K562 (cell line): ENCODE measurements at regions of chr3 and their contacts with region 1.

Region 1: GRCh38 chr3:146469150-146470017 is at the start of gene PLSCR2:
- DNase-seq: peak; percentile 85 to 88 (median 86)
- ATAC-seq: peak; percentile 97
- H3K4me3 ChIP-seq: peak within 1 kb of the TSS; percentile 48
- H3K27ac ChIP-seq: peak within 1 kb of the TSS; percentile 82
- H3K4me1 ChIP-seq: peaks cover 3 to 9% of the 10 kb centered on the region in 2 experiments; a peak in 2 of 5 replicates
- H3K27me3 ChIP-seq: no peaks in the 10 kb centered on the region
- CTCF ChIP-seq: no peak
- EP300 ChIP-seq: no peak
- POLR2A ChIP-seq: peak; percentile 89
- RAD21 ChIP-seq: no peak; a peak in 1 of 4 replicates
- polyA plus RNA-seq, gene PLSCR2: 0.07 to 0.49 TPM

Region 2: GRCh38 chr3:146200461-146201220 is 268.7 kb before region 1 on chr3:
- CTCF ChIA-PET with region 1: no interaction called
- POLR2A ChIA-PET with region 1: no interaction called
- in situ Hi-C with region 1: no loop called
- intact Hi-C with region 1: no loop called
- DNase-seq: no peak
- ATAC-seq: no peak
- H3K4me3 ChIP-seq: no peak overlapping the region
- H3K27ac ChIP-seq: no peak overlapping the region
- H3K4me1 ChIP-seq: no peaks in the 10 kb centered on the region
- H3K27me3 ChIP-seq: no peaks in the 10 kb centered on the region
- CTCF ChIP-seq: no peak
- EP300 ChIP-seq: no peak
- POLR2A ChIP-seq: no peak
- RAD21 ChIP-seq: no peak

Region 3: GRCh38 chr3:146496251-146496650 is 26.9 kb after region 1 on chr3:
- CTCF ChIA-PET with region 1: no interaction called
- POLR2A ChIA-PET with region 1: interaction called, 5 read pairs
- in situ Hi-C with region 1: no loop called
- intact Hi-C with region 1: loop called (anchors 2 kb)
- DNase-seq: no peak
- ATAC-seq: peak; percentile 9; the same call in 1 of the 3 replicates
- H3K4me3 ChIP-seq: no peak overlapping the region
- H3K27ac ChIP-seq: peak overlapping the region; percentile 73
- H3K4me1 ChIP-seq: peaks cover 9 to 15% of the 10 kb centered on the region in 2 experiments; a peak in 4 of 5 replicates
- H3K27me3 ChIP-seq: no peaks in the 10 kb centered on the region
- CTCF ChIP-seq: no peak
- EP300 ChIP-seq: no peak
- POLR2A ChIP-seq: no peak
- RAD21 ChIP-seq: no peak

Region 4: GRCh38 chr3:146503461-146504202 is 34.2 kb after region 1 on chr3:
- CTCF ChIA-PET with region 1: no interaction called
- POLR2A ChIA-PET with region 1: no interaction called
- in situ Hi-C with region 1: no loop called
- intact Hi-C with region 1: loop called (anchors 2 kb)
- DNase-seq: no peak
- ATAC-seq: peak; percentile 65
- H3K4me3 ChIP-seq: no peak overlapping the region
- H3K27ac ChIP-seq: no peak overlapping the region; the same call in 2 of the 3 replicates
- H3K4me1 ChIP-seq: peaks cover 5 to 30% of the 10 kb centered on the region in 2 experiments; a peak in 4 of 5 replicates
- H3K27me3 ChIP-seq: no peaks in the 10 kb centered on the region
- CTCF ChIP-seq: no peak
- EP300 ChIP-seq: no peak
- POLR2A ChIP-seq: no peak
- RAD21 ChIP-seq: 0 out of 4 replicates have a peak, but pooled peaks of 1 of the 2 experiments have one; percentile 5

Region 5: DNA sequence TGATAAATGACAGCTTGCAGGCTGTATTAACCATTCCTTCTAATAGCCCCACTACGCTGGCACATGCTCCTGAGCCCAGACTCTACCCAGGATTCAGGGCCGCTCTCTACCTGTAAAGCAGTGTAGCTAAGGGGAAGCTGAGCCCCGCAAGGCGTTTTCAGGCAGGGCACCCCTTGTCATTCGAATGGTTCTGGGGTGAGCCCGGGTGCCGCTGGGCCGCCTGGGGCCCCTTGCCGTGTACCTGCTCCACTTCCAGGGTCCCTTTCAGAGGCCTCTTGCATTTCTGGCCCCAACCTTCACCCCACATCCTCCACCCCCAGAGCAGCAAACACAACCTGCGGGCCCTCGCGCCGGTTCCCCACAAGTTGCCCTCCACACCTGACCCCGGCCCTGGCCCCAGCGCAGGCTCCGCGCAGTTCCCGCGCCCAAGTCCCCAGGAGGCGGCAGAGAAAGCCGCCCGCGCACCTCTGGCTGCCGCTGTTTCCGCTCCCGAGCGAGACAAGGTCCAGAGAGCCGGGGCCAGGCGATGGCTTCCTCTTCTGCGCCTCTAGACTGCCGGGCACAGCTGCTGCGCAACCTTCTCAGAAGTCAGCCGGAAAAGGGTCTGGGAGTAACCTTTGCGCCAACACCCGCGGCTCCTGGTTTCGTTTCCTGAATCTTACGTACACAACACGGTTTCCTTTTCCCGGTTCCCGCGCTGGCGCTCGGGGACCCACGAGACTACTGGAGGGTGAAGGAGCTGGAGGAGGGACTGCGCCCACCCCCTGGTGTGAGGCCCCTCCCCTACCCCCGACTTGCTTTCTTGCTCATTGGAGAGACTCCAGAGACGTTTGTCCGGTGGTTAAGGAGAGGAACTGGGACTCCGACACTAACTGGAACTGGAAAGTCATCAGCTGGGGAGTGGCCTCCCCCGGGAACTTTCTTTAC is 74.9 kb after region 1 on chr3 and contains the start of gene PLSCR1:
- CTCF ChIA-PET with region 1: no interaction called
- POLR2A ChIA-PET with region 1: interaction called, 12 read pairs
- in situ Hi-C with region 1: no loop called
- intact Hi-C with region 1: loop called (anchors 1 kb)
- DNase-seq: peak; percentile 92 to 95 (median 94)
- ATAC-seq: peak; percentile 92
- H3K4me3 ChIP-seq: peak within 1 kb of the TSS; percentile 92
- H3K27ac ChIP-seq: peak within 1 kb of the TSS; percentile 92
- H3K4me1 ChIP-seq: peaks cover 4 to 28% of the 10 kb centered on the region in 2 experiments; a peak in 4 of 5 replicates
- H3K27me3 ChIP-seq: no peaks in the 10 kb centered on the region
- CTCF ChIP-seq: no peak
- EP300 ChIP-seq: peak; percentile 29; the same call in 1 of the 2 replicates
- POLR2A ChIP-seq: peak; percentile 89
- RAD21 ChIP-seq: no peak
- polyA plus RNA-seq, gene PLSCR1: 115 to 122 TPM

Region 6: GRCh38 chr3:146569314-146569713 is 99.9 kb after region 1 on chr3:
- CTCF ChIA-PET with region 1: no interaction called
- POLR2A ChIA-PET with region 1: no interaction called
- in situ Hi-C with region 1: no loop called
- intact Hi-C with region 1: loop called (anchors 5 kb)
- DNase-seq: no peak
- ATAC-seq: no peak
- H3K4me3 ChIP-seq: no peak overlapping the region
- H3K27ac ChIP-seq: no peak overlapping the region
- H3K4me1 ChIP-seq: no peaks in the 10 kb centered on the region
- H3K27me3 ChIP-seq: no peaks in the 10 kb centered on the region
- CTCF ChIP-seq: no peak
- EP300 ChIP-seq: no peak
- POLR2A ChIP-seq: no peak
- RAD21 ChIP-seq: no peak

Region 7: DNA sequence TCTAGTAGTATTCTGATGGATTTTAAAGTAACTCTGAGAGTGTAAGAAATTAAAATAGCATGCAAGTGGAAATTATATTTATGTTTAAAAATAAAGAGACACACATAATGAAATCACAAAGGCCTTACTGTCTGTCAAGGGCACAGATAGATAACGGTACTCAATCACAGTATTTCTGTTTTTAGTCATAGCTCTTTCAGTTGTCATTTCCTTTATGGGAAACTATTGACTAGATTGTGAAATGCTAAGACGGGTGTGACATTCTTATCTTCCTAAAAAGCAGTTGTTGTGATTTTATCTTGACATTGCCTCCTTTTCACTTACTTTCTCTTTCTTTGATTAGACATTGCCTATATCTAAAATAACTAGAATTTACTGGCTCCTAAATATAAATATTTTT is 235.8 kb after region 1 on chr3:
- CTCF ChIA-PET with region 1: no interaction called
- POLR2A ChIA-PET with region 1: no interaction called
- in situ Hi-C with region 1: no loop called
- intact Hi-C with region 1: no loop called
- DNase-seq: no peak
- ATAC-seq: no peak
- H3K4me3 ChIP-seq: no peak overlapping the region
- H3K27ac ChIP-seq: no peak overlapping the region
- H3K4me1 ChIP-seq: no peaks in the 10 kb centered on the region
- H3K27me3 ChIP-seq: no peaks in the 10 kb centered on the region
- CTCF ChIP-seq: no peak
- EP300 ChIP-seq: no peak
- POLR2A ChIP-seq: no peak
- RAD21 ChIP-seq: no peak